Endothelial cell of umbilical vein (primary cell): ENCODE measurements at regions of chr6 and their contacts with region 1.

Region 1: DNA sequence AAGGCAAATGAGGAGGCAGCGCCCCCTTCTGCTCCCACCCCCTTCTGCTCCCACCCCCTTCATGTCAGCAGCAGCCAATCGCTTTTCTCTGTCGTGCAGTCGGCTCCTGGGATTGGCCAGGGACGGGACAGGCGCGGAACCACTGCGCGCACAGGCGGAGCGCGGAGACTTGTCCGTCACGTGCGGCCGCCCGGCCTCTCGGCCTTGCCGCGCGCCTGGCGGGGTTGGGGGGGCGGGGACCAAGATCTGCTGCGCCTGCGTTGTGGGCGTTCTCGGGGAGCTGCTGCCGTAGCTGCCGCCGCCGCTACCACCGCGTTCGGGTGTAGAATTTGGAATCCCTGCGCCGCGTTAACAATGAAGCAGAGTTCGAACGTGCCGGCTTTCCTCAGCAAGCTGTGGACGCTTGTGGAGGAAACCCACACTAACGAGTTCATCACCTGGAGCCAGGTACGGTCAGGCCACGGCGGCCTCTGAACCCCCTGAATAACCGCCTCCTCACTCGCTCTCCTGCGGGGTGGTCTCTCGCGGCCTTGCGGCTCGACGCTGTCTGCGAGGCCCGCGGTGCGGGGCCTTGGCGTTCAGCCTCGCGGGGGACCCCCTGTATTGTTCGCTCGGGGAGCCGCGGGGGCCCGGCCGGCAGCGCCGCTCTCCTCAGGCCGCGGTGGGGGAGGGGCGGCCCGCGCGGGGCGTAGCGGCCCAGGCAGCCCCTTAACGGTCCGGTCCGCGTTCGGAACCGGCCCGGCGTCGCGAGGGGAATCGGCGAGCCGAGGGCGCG is at the start of gene HSF2:
- DNase-seq: peak; percentile 99
- H3K4me3 ChIP-seq: peak within 1 kb of the TSS; percentile 22 to 95 (median 77)
- H3K27ac ChIP-seq: peak within 1 kb of the TSS; percentile 48
- H3K4me1 ChIP-seq: peaks cover 11% of the 10 kb centered on the region
- H3K27me3 ChIP-seq: peaks cover under 1 to 2% of the 10 kb centered on the region in 2 experiments
- CTCF ChIP-seq: peak in 1 of 2 donors; percentile 48
- POLR2A ChIP-seq: peak; percentile 29
- total RNA-seq, gene HSF2: 8.0 and 10.1 TPM in 2 replicates

Region 2: GRCh38 chr6:121506761-121507754 is 892.5 kb before region 1 on chr6:
- CTCF ChIA-PET with region 1: no interaction called
- POLR2A ChIA-PET with region 1: interaction called, 12 read pairs
- dilution Hi-C with region 1: no loop called
- intact Hi-C with region 1: no loop called
- DNase-seq: no peak
- H3K4me3 ChIP-seq: no peak overlapping the region
- H3K27ac ChIP-seq: no peak overlapping the region
- H3K4me1 ChIP-seq: peaks cover 28% of the 10 kb centered on the region
- H3K27me3 ChIP-seq: no peaks in the 10 kb centered on the region
- CTCF ChIP-seq: no peak
- POLR2A ChIP-seq: no peak

Region 3: GRCh38 chr6:122381497-122382265 is 17.9 kb before region 1 on chr6:
- CTCF ChIA-PET with region 1: interaction called, 6 read pairs
- POLR2A ChIA-PET with region 1: no interaction called
- dilution Hi-C with region 1: no loop called
- intact Hi-C with region 1: loop called (anchors 2 kb)
- DNase-seq: peak; percentile 69
- H3K4me3 ChIP-seq: no peak overlapping the region
- H3K27ac ChIP-seq: no peak overlapping the region
- H3K4me1 ChIP-seq: no peaks in the 10 kb centered on the region
- H3K27me3 ChIP-seq: no peaks in the 10 kb centered on the region
- CTCF ChIP-seq: peak; percentile 56 to 75
- POLR2A ChIP-seq: no peak

Region 4: GRCh38 chr6:122471107-122472021 is 71.8 kb after region 1 on chr6 and contains the start of gene SERINC1:
- CTCF ChIA-PET with region 1: no interaction called
- POLR2A ChIA-PET with region 1: interaction called, 3 read pairs
- dilution Hi-C with region 1: no loop called
- intact Hi-C with region 1: loop called (anchors 1 kb)
- DNase-seq: peak; percentile 97
- H3K4me3 ChIP-seq: peak within 1 kb of the TSS; percentile 83 to 98 (median 97)
- H3K27ac ChIP-seq: peak within 1 kb of the TSS; percentile 91
- H3K4me1 ChIP-seq: peaks cover 8% of the 10 kb centered on the region
- H3K27me3 ChIP-seq: no peaks in the 10 kb centered on the region
- CTCF ChIP-seq: no peak
- POLR2A ChIP-seq: peak; percentile 82
- total RNA-seq, gene SERINC1: 76.5 and 82.0 TPM in 2 replicates

Region 5: DNA sequence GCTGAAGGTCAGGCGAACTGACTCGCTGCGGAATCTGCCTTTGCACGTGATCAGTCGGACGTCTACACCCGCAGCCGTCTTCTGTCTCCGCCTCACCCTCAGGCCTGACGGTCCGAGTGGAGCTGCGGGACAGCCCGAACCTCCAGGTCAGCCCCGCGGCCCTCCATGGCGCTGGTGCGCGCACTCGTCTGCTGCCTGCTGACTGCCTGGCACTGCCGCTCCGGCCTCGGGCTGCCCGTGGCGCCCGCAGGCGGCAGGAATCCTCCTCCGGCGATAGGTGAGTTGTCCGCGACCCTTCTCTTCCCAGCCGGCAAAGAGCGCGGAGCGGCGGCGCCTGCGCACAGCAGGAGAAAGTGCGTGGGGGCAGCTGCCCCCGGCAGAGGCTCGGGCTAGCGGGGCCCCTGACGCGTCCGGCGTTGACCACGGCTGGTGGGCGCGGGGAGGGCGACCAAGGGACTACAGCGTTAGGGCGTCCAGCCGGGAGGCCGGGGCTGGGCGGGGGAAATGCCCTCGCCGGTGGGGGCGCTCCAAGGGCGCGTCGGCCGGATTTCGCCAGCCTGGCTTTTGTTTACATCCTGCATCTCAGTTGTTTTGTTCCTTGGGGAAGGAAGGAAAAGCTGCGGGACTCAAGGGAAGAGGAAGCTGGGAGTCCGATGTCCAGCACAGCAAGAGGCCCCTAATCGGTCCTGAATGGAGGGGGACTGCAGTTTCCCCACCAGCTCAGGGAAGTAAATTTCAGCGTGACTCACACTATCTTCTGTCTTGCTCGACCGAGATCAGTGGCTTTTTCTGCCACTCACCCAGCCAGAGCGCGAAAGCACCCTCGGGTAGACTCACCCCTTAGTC is 389.8 kb after region 1 on chr6 and contains the start of gene SMPDL3A:
- CTCF ChIA-PET with region 1: no interaction called
- POLR2A ChIA-PET with region 1: no interaction called
- dilution Hi-C with region 1: no loop called
- intact Hi-C with region 1: loop called (anchors 10 kb)
- DNase-seq: peak; percentile 77
- H3K4me3 ChIP-seq: peak within 1 kb of the TSS; percentile 53 to 91 (median 58)
- H3K27ac ChIP-seq: peak within 1 kb of the TSS; percentile 31
- H3K4me1 ChIP-seq: peaks cover 6% of the 10 kb centered on the region
- H3K27me3 ChIP-seq: peaks cover 9 to 21% of the 10 kb centered on the region in 2 experiments
- CTCF ChIP-seq: peak; percentile 35 to 55
- POLR2A ChIP-seq: peak; percentile 9
- total RNA-seq, gene SMPDL3A: 4.1 TPM in 2 replicates